ENCODE measurements at regions of chr9 and their contacts with region 1.

Region 1: GRCh38 chr9:116737152-116737546 is 50.0 kb downstream of the TRIM32 start:
- DNase-seq: peak; percentile 73
- H3K4me3 Mint-ChIP-seq: no peak overlapping the region
- H3K27ac Mint-ChIP-seq: no peak overlapping the region
- H3K4me1 Mint-ChIP-seq: peaks cover 3% of the 10 kb centered on the region
- H3K27me3 Mint-ChIP-seq: peaks cover 6% of the 10 kb centered on the region

Region 2: GRCh38 chr9:116724123-116724522 is 13.0 kb before region 1 on chr9:
- CTCF ChIA-PET with region 1: interaction called, 24 read pairs
- POLR2A ChIA-PET with region 1: no interaction called
- intact Hi-C with region 1: no loop called
- DNase-seq: no peak
- H3K4me3 Mint-ChIP-seq: no peak overlapping the region
- H3K27ac Mint-ChIP-seq: no peak overlapping the region
- H3K4me1 Mint-ChIP-seq: no peaks in the 10 kb centered on the region
- H3K27me3 Mint-ChIP-seq: no peaks in the 10 kb centered on the region

Region 3: GRCh38 chr9:116757030-116757429 is 19.9 kb after region 1 on chr9:
- CTCF ChIA-PET with region 1: no interaction called
- POLR2A ChIA-PET with region 1: no interaction called
- intact Hi-C with region 1: no loop called
- DNase-seq: no peak
- H3K4me3 Mint-ChIP-seq: no peak overlapping the region
- H3K27ac Mint-ChIP-seq: no peak overlapping the region
- H3K4me1 Mint-ChIP-seq: no peaks in the 10 kb centered on the region
- H3K27me3 Mint-ChIP-seq: peaks cover 3% of the 10 kb centered on the region

Region 4: GRCh38 chr9:116860509-116861120 is 123.5 kb after region 1 on chr9:
- CTCF ChIA-PET with region 1: interaction called, 73 read pairs
- POLR2A ChIA-PET with region 1: no interaction called
- intact Hi-C with region 1: no loop called
- DNase-seq: peak; percentile 27
- H3K4me3 Mint-ChIP-seq: no peak overlapping the region
- H3K27ac Mint-ChIP-seq: no peak overlapping the region
- H3K4me1 Mint-ChIP-seq: no peaks in the 10 kb centered on the region
- H3K27me3 Mint-ChIP-seq: peaks cover 4% of the 10 kb centered on the region

Region 5: DNA sequence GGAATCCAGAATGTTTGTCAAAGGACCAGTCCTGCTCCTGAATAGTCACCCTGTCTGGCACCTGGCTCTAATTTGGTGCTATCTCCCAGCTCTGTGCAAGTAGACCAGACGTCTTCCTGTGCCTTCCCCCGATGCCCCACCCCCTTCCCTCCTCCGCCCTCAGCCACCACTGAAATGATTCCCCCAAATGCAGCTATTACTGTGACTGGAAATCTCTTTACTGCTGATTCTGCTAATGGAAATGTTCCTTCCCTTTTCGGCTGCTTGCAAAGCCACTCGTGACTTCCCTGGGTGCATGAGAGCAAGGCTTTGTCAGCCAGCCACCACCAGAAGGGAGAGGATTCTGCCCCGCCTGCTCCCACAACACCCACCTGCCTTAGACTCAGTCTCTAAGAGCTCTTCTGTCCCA is 666.3 kb after region 1 on chr9:
- CTCF ChIA-PET with region 1: no interaction called
- POLR2A ChIA-PET with region 1: no interaction called
- intact Hi-C with region 1: no loop called
- DNase-seq: no peak
- H3K4me3 Mint-ChIP-seq: no peak overlapping the region
- H3K27ac Mint-ChIP-seq: no peak overlapping the region
- H3K4me1 Mint-ChIP-seq: no peaks in the 10 kb centered on the region
- H3K27me3 Mint-ChIP-seq: peaks cover 7% of the 10 kb centered on the region

Measured in activated CD4-positive, alpha-beta memory T cell treated with anti-CD3 and anti-CD28 coated beads for 36 hours (primary cell).